Caco-2 (cell line): ENCODE measurements at regions of chr6 and their contacts with region 1.

Region 1: GRCh38 chr6:106608062-106608668 is 21.1 kb downstream of the RTN4IP1 start:
- DNase-seq: peak in 1 of 2 experiments; percentile 67
- H3K4me3 ChIP-seq: no peak overlapping the region
- H3K4me3 Mint-ChIP-seq: no peak overlapping the region
- H3K27ac Mint-ChIP-seq: no peak overlapping the region
- H3K4me1 ChIP-seq: no peaks in the 10 kb centered on the region
- H3K4me1 Mint-ChIP-seq: no peaks in the 10 kb centered on the region
- H3K27me3 ChIP-seq: no peaks in the 10 kb centered on the region
- H3K27me3 Mint-ChIP-seq: no peaks in the 10 kb centered on the region
- CTCF ChIP-seq: peak; percentile 54 to 56

Region 2: GRCh38 chr6:106773484-106773913 is 165.3 kb after region 1 on chr6:
- CTCF ChIA-PET with region 1: no interaction called
- POLR2A ChIA-PET with region 1: no interaction called
- intact Hi-C with region 1: no loop called
- DNase-seq: peak; percentile 36 to 45
- H3K4me3 ChIP-seq: no peak overlapping the region
- H3K4me3 Mint-ChIP-seq: no peak overlapping the region
- H3K27ac Mint-ChIP-seq: peak overlapping the region; percentile 8
- H3K4me1 ChIP-seq: no peaks in the 10 kb centered on the region
- H3K4me1 Mint-ChIP-seq: peaks cover 10% of the 10 kb centered on the region
- H3K27me3 ChIP-seq: no peaks in the 10 kb centered on the region
- H3K27me3 Mint-ChIP-seq: no peaks in the 10 kb centered on the region
- CTCF ChIP-seq: no peak

Region 3: DNA sequence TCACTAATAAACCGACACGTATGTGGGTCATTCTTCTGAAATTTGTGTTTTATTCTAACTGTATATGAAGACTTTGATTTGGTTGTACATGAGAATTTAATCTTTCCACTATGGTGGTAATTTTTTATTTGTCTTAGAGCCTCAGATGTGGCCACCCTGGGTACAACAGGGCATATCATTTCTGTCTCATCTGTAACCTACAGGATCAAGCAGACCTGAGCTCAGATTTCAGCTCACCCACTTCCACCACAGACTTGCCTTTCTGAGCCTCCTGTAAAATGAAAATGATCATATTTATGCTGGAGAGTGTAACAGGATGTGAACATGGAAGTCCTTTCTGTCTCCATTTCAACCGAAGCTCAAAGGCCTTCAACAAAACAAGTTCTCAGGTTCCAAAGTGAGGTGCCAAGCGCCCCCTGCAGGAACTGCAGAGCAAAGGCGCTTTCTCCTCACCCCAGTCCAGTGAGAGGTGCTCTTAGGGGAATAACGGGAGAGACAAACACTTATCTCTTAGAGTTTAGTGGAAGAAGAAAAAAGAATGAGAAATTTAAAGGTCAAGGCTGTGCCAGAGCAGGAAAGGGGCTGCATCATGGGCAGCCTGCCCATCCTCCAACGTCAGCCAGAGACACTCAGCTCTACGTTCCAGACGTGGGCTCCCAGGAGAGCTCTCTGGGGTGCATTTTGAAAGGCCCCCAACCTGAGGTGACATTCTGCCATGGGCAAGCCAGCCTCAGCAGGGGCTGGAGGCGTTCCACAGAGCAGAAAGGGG is 389.4 kb after region 1 on chr6:
- CTCF ChIA-PET with region 1: interaction called, 4 read pairs
- POLR2A ChIA-PET with region 1: no interaction called
- intact Hi-C with region 1: loop called (anchors 5 kb)
- DNase-seq: peak; percentile 52 to 67
- H3K4me3 ChIP-seq: no peak overlapping the region
- H3K4me3 Mint-ChIP-seq: no peak overlapping the region
- H3K27ac Mint-ChIP-seq: no peak overlapping the region
- H3K4me1 ChIP-seq: no peaks in the 10 kb centered on the region
- H3K4me1 Mint-ChIP-seq: peaks cover 9% of the 10 kb centered on the region
- H3K27me3 ChIP-seq: no peaks in the 10 kb centered on the region
- H3K27me3 Mint-ChIP-seq: peaks cover under 1% of the 10 kb centered on the region
- CTCF ChIP-seq: peak; percentile 78 to 82